Breast epithelium (tissue), 4 donors: ENCODE measurements at regions of chr15 and their contacts with region 1.

Region 1: GRCh38 chr15:83278173-83278572 is 6.3 kb downstream of the BNC1 start:
- DNase-seq: no peak
- H3K4me3 ChIP-seq: no peak overlapping the region
- H3K27ac ChIP-seq: no peak overlapping the region
- H3K4me1 ChIP-seq: no peaks in the 10 kb centered on the region
- H3K27me3 ChIP-seq: peaks cover 0 to 11% of the 10 kb centered on the region in 2 donors
- CTCF ChIP-seq: no peak
- POLR2A ChIP-seq: no peak

Region 2: DNA sequence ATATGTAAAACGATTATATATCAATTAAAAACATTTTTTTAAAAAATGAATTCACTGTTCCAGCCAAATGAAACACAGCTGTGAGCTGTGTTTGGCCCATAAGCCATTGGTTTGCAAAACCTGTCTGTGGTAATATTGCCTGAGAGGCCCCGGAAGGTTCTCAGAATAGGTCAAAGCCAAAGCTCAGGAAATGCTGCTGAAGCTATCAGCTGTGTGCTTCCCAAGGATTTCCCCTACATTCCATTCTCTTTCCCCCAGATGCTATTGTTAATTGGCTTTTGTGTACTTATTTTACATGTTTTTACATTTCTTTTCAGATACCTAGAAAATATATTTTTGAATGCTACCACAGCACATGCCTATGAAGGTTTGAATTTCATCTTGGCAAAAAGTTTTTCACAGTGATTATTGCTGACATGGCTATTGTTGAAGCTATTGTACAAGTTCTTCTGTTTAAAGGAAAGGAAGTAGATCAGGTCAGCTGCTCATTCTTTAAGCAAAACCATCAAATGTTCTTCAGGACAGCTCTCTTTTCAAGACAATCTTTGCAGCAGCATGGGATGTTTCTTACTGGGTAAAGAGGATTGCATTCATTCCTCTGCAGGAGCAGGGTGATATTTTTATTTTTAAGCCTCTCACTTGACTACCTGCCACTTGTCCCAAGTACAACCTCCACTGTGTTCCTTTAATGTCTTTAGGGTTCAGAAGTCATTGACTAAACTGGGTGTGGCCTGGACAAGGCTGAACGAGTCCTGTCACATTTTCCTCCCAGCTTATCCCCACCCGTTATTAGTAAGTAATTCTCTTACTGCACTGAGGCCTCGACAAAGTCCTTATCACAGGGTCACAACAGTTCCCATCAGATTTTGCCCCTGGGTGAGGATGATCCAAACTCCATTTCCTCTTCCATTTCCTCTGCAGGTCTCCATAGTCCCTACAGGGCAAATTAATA is 32.6 kb after region 1 on chr15:
- intact Hi-C with region 1: loop called (anchors 2 kb)
- DNase-seq: no peak
- H3K4me3 ChIP-seq: no peak overlapping the region
- H3K27ac ChIP-seq: no peak overlapping the region
- H3K4me1 ChIP-seq: no peaks in the 10 kb centered on the region
- H3K27me3 ChIP-seq: no peaks in the 10 kb centered on the region
- CTCF ChIP-seq: no peak
- POLR2A ChIP-seq: no peak